MCF 10A (cell line): ENCODE measurements at regions of chr3 and their contacts with region 1.

Region 1: DNA sequence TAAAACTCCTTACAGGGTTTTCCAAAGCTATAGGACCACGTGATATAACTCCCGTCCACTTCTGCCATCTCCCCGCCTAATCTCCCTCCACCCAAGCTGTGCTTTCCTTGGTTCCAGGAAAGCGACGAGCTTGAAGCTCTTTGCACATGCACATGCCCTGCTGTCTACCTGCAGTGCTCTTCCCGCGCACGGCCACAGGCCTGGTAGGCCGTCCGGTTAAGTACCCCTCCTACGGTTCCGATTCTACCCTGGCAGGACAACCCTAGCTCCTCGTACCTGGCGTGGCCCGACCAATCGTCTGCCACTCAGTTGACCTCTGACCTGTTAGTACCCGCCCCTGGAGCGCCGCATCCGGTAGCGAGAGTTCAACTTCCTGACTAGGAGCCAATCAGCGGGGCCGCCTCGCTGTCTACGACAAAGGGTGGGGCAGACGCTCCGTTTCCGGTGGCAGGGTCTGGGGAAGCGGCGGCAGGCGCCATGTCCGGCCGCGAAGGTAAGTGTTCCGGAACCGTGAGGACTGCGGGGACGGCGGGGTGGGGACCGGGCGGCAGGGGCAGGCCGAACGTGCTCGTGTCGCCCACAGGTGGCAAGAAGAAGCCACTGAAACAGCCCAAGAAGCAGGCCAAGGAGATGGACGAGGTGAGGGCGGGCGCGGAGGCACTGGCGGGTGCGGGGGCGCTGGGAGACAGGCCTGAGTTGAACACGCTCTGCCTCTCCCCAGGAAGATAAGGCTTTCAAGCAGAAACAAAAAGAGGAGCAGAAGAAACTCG is at the starts of genes CCDC51 and TMA7:
- DNase-seq: peak; percentile 98
- H3K4me3 Mint-ChIP-seq: peak within 1 kb of the TSS; percentile 88
- H3K27ac Mint-ChIP-seq: peak within 1 kb of the TSS; percentile 77
- H3K4me1 Mint-ChIP-seq: peaks cover 18% of the 10 kb centered on the region
- H3K27me3 Mint-ChIP-seq: no peaks in the 10 kb centered on the region
- CTCF ChIP-seq: no peak
- total RNA-seq, gene CCDC51: 31.9 and 32.5 TPM in 2 replicates
- total RNA-seq, gene TMA7: 356 and 372 TPM in 2 replicates

Region 2: DNA sequence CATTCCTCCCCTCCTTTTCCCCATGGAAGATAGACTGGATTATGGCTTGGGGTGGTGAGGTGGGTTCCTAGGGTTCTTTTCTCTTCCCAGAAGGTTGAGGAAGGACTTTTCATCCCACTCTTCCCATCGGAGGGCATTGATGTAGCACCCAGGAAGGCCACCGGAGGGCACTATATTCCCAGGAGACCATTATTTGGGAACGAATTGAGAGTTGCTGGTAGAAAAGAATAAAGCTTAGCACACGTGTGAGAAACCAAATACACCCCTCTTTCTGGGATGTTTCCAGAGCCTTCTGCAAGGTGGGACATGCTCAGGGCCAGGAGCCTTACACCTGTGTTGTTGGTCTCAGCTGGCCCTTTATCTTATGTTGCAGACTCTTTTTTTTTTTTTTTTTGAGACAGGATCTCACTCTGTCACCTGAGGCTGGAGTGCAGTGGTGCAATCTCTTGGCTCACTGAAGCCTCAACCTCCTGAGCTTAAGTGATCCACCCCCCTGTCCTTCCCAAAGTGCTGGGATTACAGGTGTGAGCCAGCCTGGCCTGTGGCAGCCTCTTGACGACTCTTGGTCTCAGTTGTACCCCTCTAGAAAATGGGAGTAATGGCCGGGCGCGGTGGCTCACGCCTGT is 245.4 kb before region 1 on chr3:
- CTCF ChIA-PET with region 1: interaction called, 65 read pairs
- POLR2A ChIA-PET with region 1: interaction called, 8 read pairs
- intact Hi-C with region 1: loop called (anchors 1 kb)
- DNase-seq: peak; percentile 87
- H3K4me3 Mint-ChIP-seq: no peak overlapping the region
- H3K27ac Mint-ChIP-seq: no peak overlapping the region
- H3K4me1 Mint-ChIP-seq: no peaks in the 10 kb centered on the region
- H3K27me3 Mint-ChIP-seq: no peaks in the 10 kb centered on the region
- CTCF ChIP-seq: peak; percentile 94

Region 3: GRCh38 chr3:48268381-48269183 is 171.4 kb before region 1 on chr3:
- CTCF ChIA-PET with region 1: interaction called, 182 read pairs
- POLR2A ChIA-PET with region 1: interaction called, 73 read pairs
- intact Hi-C with region 1: loop called (anchors 1 kb)
- DNase-seq: peak; percentile 86
- H3K4me3 Mint-ChIP-seq: peak overlapping the region; percentile 69
- H3K27ac Mint-ChIP-seq: peak overlapping the region; percentile 83
- H3K4me1 Mint-ChIP-seq: peaks cover 29% of the 10 kb centered on the region
- H3K27me3 Mint-ChIP-seq: no peaks in the 10 kb centered on the region
- CTCF ChIP-seq: no peak

Region 4: GRCh38 chr3:48301020-48301796 is 138.8 kb before region 1 on chr3:
- CTCF ChIA-PET with region 1: interaction called, 12 read pairs
- POLR2A ChIA-PET with region 1: interaction called, 11 read pairs
- intact Hi-C with region 1: no loop called
- DNase-seq: peak; percentile 92
- H3K4me3 Mint-ChIP-seq: peak within 1 kb of the TSS; percentile 97
- H3K27ac Mint-ChIP-seq: peak within 1 kb of the TSS; percentile 99
- H3K4me1 Mint-ChIP-seq: peaks cover 24% of the 10 kb centered on the region
- H3K27me3 Mint-ChIP-seq: no peaks in the 10 kb centered on the region
- CTCF ChIP-seq: no peak

Region 5: DNA sequence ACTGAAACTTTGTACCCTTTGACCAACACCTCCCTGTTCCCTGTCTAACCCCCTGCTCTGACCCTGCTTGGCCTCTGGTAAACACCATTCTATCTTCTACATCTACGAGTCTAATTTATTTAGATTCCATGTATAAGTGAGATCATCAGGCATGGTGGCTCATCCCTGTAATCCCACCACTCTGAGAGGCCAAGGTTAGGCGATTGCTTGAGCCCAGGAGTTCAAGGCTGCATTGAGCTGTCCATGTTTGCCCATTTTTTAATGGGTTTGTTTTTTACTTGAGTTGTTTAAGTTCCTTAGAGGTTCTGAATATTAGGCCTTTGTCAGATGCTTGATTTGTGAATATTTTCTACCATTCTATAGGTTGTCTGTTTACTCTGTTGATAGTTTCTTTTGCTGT is 51.0 kb before region 1 on chr3:
- CTCF ChIA-PET with region 1: interaction called, 20 read pairs
- POLR2A ChIA-PET with region 1: interaction called, 7 read pairs
- intact Hi-C with region 1: no loop called
- DNase-seq: no peak
- H3K4me3 Mint-ChIP-seq: no peak overlapping the region
- H3K27ac Mint-ChIP-seq: no peak overlapping the region
- H3K4me1 Mint-ChIP-seq: no peaks in the 10 kb centered on the region
- H3K27me3 Mint-ChIP-seq: peaks cover 24% of the 10 kb centered on the region
- CTCF ChIP-seq: no peak

Region 6: GRCh38 chr3:48429317-48429959 is 10.6 kb before region 1 on chr3:
- CTCF ChIA-PET with region 1: interaction called, 81 read pairs
- POLR2A ChIA-PET with region 1: interaction called, 95 read pairs
- intact Hi-C with region 1: no loop called
- DNase-seq: peak; percentile 69
- H3K4me3 Mint-ChIP-seq: peak overlapping the region; percentile 99
- H3K27ac Mint-ChIP-seq: peak overlapping the region; percentile 98
- H3K4me1 Mint-ChIP-seq: peaks cover 71% of the 10 kb centered on the region
- H3K27me3 Mint-ChIP-seq: no peaks in the 10 kb centered on the region
- CTCF ChIP-seq: no peak

Region 7: GRCh38 chr3:48556793-48557626 is 117.0 kb after region 1 on chr3 and contains the start of gene PFKFB4:
- CTCF ChIA-PET with region 1: interaction called, 8 read pairs
- POLR2A ChIA-PET with region 1: interaction called, 16 read pairs
- intact Hi-C with region 1: no loop called
- DNase-seq: peak; percentile 99
- H3K4me3 Mint-ChIP-seq: peak within 1 kb of the TSS; percentile 74
- H3K27ac Mint-ChIP-seq: peak within 1 kb of the TSS; percentile 47
- H3K4me1 Mint-ChIP-seq: peaks cover 11% of the 10 kb centered on the region
- H3K27me3 Mint-ChIP-seq: no peaks in the 10 kb centered on the region
- CTCF ChIP-seq: no peak
- total RNA-seq, gene PFKFB4: 3.4 and 4.6 TPM in 2 replicates

Region 8: DNA sequence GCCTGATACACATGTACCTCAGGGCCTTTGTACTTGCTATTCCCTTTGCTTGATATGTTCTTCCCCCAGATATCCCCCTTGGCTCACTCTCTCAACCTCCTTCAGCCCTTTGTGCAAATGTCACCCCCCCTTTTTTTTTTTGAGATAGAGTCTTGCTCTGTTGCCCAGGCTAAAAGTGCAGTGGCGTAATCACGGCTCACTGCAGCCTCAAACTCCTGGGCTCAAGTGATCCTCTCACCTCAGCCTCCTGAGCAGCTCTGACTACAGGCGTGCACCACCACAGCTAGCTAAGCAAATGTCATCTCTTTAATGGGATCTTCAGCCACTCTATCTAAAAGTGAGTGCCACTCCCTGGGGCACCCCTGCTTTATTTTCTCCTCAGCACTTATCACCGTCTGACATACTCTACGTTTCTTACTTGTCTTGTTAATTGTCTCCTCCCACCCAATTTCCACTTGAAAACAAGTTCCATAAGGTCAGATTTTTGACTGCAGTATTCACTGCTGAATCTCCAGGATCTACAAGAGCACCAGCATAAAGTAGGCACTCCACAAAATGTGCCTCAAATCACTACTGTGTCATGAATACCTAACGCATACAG is 262.4 kb after region 1 on chr3:
- CTCF ChIA-PET with region 1: no interaction called
- POLR2A ChIA-PET with region 1: no interaction called
- intact Hi-C with region 1: no loop called
- DNase-seq: no peak
- H3K4me3 Mint-ChIP-seq: no peak overlapping the region
- H3K27ac Mint-ChIP-seq: no peak overlapping the region
- H3K4me1 Mint-ChIP-seq: peaks cover 8% of the 10 kb centered on the region
- H3K27me3 Mint-ChIP-seq: no peaks in the 10 kb centered on the region
- CTCF ChIP-seq: no peak